Activated naive CD4-positive, alpha-beta T cell treated with anti-CD3 and anti-CD28 coated beads for 36 hours (primary cell): ENCODE measurements at regions of chrX and their contacts with region 1.

Region 1: DNA sequence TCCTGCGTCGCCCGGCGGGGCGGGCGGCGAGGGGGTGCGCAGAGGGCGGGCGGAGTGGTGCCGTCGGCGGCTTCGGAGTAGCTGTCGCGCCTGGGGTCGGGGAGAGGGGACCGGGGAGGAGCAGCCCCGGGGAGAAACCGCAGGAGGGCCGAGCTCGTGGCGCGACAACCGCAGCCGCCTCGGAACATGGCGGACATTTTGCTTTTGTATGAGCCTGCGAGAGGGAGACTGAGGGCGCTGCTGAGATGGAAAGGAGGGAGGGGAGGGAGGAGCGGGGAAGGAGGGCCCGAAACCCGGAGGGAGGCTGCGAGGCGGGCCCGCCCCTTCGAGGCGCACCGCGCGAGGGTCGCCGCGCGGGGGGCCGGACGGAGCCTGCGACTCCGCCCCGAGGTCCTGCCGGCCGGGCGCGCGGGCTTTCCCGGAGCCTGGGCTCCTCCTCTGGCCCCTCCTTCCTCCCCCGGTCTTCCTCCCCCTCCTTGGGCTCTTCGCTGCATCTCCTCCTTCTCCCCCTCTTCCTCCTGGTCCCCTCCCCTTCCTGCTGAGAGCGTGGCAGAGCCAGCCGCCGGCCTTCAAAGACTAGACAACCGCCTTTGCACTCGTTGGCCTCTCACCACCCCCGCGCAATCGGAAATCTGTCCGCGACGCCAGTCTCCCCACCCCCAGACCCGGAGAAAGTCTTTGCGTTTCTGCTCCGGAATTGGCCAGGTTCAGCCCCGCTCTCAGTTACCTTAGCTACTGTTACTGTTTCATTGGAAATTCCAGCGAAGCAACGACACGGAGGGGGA is 1.1 kb downstream of the INTS6L start:
- DNase-seq: peak; percentile 91
- H3K4me3 Mint-ChIP-seq: peak overlapping the region; percentile 97
- H3K27ac Mint-ChIP-seq: peak overlapping the region; percentile 97
- H3K4me1 Mint-ChIP-seq: peaks cover 38% of the 10 kb centered on the region
- H3K27me3 Mint-ChIP-seq: no peaks in the 10 kb centered on the region

Region 2: GRCh38 chrX:134807039-134807731 is 714.4 kb before region 1 on chrX:
- CTCF ChIA-PET with region 1: interaction called, 4 read pairs
- intact Hi-C with region 1: loop called (anchors 2 kb)
- DNase-seq: peak; percentile 93
- H3K4me3 Mint-ChIP-seq: peak overlapping the region; percentile 92
- H3K27ac Mint-ChIP-seq: peak overlapping the region; percentile 95
- H3K4me1 Mint-ChIP-seq: peaks cover 14% of the 10 kb centered on the region
- H3K27me3 Mint-ChIP-seq: no peaks in the 10 kb centered on the region

Region 3: DNA sequence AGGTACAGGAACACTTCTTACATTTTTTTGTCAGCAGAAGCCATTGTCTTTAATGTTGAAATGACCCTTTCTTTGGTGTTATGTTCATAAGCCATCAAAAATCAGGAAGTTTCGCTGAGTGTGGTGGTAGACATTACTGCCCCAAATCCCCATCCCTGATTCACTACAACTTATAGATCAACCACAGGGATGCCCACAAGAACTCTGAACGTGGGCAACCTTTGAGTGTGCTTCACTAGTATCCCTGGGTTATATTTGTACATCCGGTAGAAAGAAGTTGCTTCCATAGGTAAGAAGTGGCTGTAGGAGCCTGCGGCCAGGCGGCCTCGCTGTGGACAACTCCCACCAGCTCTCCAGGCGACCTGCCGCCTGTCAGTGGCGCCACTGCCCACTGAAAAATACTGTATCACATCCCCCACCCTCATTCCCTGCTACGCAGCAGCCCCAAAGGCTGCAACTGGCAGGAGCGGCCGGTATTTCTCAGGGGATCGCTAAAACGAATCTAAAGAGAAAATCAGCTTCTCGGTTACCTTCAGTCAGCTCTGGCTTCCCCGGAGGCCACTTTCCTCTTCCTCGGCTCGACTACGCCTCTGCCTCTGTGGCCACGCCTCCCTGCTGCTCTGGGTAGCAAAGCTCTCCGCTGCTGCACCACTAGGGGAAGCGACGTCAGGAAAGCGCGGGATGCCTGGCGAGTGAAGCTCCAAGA is 226.2 kb before region 1 on chrX:
- CTCF ChIA-PET with region 1: no interaction called
- intact Hi-C with region 1: loop called (anchors 2 kb)
- DNase-seq: peak; percentile 77
- H3K4me3 Mint-ChIP-seq: peak overlapping the region; percentile 85
- H3K27ac Mint-ChIP-seq: peak overlapping the region; percentile 83
- H3K4me1 Mint-ChIP-seq: peaks cover 16% of the 10 kb centered on the region
- H3K27me3 Mint-ChIP-seq: no peaks in the 10 kb centered on the region

Region 4: GRCh38 chrX:135536877-135537276 is 15.3 kb after region 1 on chrX:
- CTCF ChIA-PET with region 1: interaction called, 5 read pairs
- intact Hi-C with region 1: loop called (anchors 1 kb)
- DNase-seq: no peak
- H3K4me3 Mint-ChIP-seq: no peak overlapping the region
- H3K27ac Mint-ChIP-seq: peak overlapping the region; percentile 78
- H3K4me1 Mint-ChIP-seq: peaks cover 61% of the 10 kb centered on the region
- H3K27me3 Mint-ChIP-seq: no peaks in the 10 kb centered on the region

Region 5: DNA sequence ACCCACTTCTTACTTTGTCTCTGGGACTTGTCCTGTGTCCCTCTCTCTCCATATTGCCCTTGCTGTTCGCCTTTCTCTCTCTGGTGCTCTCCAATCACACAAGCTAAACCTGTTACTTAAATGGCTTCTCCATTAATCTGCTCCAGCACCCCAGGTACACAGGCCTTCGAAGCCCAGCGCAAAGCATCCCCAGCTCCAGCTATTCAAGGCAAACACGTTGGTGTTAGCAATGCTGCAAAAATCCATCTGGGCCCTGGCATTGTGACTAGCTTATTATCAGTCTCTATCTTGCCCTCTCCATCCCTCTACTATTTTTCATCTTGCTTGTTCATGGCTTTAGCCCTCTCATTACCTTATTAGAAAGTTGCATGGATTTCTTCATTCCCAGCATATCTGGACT is 29.6 kb after region 1 on chrX:
- CTCF ChIA-PET with region 1: no interaction called
- intact Hi-C with region 1: no loop called
- DNase-seq: no peak
- H3K4me3 Mint-ChIP-seq: no peak overlapping the region
- H3K27ac Mint-ChIP-seq: no peak overlapping the region
- H3K4me1 Mint-ChIP-seq: no peaks in the 10 kb centered on the region
- H3K27me3 Mint-ChIP-seq: no peaks in the 10 kb centered on the region

Region 6: DNA sequence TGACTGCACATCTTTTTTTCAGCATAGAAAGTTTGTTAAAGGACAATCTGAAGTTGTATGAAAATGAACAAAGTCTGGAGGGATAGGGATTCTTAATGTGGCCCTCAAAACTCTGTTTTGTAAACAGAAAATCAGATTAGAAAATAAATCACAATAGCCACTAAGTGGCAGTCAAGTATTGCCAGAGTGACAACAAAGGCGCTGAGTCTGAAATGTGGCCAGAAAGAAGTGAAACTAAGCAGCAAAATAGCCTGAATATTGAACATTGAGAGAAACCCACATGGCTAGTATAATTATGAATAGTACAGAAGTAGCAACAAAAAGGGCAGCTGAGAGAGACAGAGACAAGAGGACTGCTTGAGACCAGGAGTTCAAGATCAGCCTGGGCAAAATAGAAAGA is 110.8 kb after region 1 on chrX:
- CTCF ChIA-PET with region 1: no interaction called
- intact Hi-C with region 1: no loop called
- DNase-seq: no peak
- H3K4me3 Mint-ChIP-seq: no peak overlapping the region
- H3K27ac Mint-ChIP-seq: no peak overlapping the region
- H3K4me1 Mint-ChIP-seq: no peaks in the 10 kb centered on the region
- H3K27me3 Mint-ChIP-seq: peaks cover 3% of the 10 kb centered on the region

Region 7: GRCh38 chrX:135985141-135985972 is 463.8 kb after region 1 on chrX and contains the start of gene SLC9A6:
- CTCF ChIA-PET with region 1: no interaction called
- intact Hi-C with region 1: loop called (anchors 1 kb)
- DNase-seq: peak; percentile 63
- H3K4me3 Mint-ChIP-seq: peak within 1 kb of the TSS; percentile 85
- H3K27ac Mint-ChIP-seq: peak within 1 kb of the TSS; percentile 77
- H3K4me1 Mint-ChIP-seq: peaks cover 50% of the 10 kb centered on the region
- H3K27me3 Mint-ChIP-seq: no peaks in the 10 kb centered on the region
- total RNA-seq, gene SLC9A6: 9.7 to 10.0 TPM